Prostate gland (tissue), 2 donors: ENCODE measurements at regions of chr6 and their contacts with region 1.

Region 1: DNA sequence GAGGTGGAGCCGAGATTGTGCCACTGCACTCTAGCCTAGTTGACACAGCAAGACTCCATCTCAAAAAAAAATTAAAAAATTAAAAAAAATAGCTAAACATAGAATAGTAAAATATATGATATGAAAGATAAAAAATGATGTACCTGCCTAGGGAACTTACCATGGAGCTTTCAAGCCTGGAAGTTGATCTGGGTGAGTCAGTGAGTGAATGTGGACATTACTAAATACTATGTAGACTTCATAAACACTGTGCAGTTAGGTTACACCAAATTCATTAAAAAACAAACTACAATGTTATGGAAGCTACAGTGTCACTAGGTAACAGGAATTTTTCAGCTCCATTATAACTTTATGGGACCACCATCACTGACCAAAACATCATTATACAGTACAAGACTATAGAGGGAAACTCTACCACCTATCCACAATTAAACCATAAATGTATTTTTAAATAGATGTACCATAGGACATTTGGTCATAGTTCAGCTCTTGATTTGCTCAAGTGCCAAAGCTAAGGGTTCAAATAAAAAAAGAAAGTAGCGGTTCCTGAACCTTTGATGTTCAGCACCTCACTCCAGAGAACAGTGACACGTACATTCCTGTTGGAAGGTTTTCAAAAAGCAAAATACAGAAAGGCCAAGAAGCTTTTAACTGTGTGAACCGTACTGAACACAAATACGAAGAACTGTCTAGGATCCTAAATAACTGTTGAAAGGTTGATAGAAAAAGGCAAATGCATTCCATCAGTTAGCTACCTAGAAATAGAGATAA is 52.4 kb upstream of the SPDEF start:
- DNase-seq: no peak
- H3K4me3 ChIP-seq: no peak overlapping the region
- H3K27ac ChIP-seq: peak overlapping the region; percentile 67 to 76
- H3K4me1 ChIP-seq: peaks cover 10% of the 10 kb centered on the region
- H3K27me3 ChIP-seq: no peaks in the 10 kb centered on the region
- CTCF ChIP-seq: no peak
- POLR2A ChIP-seq: no peak

Region 2: GRCh38 chr6:34196126-34196830 is 412.2 kb before region 1 on chr6:
- intact Hi-C with region 1: loop called (anchors 5 kb)
- DNase-seq: peak; percentile 79
- H3K4me3 ChIP-seq: peak overlapping the region; percentile 32 to 41
- H3K27ac ChIP-seq: no peak overlapping the region
- H3K4me1 ChIP-seq: no peaks in the 10 kb centered on the region
- H3K27me3 ChIP-seq: no peaks in the 10 kb centered on the region
- CTCF ChIP-seq: peak; percentile 91 to 98 (median 94)
- POLR2A ChIP-seq: peak; percentile 18

Region 3: DNA sequence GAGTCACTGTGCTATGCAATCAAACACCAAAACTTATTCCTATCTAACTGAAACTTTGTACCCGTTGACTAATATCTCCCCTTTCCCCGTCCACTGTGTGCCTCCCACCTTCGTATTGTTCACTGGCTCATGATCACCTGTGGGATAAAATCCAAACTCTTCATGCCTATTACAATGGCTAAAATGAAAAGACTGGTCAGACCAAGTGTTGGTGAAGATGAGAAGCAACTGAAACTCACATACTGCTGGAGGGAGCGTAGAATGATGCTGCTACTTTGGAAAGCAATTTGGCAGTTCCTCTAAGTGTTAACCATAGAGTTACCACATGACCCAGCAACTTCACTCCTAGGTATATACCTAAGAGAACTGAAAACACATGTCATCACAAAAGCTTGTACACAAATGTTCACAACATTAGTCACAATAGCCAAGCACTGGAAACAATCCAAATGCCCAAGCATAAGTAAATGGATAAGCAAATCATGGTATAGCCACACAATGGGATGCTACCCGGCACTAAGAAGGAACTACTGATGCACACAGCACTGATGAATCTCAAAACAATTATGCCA is 195.8 kb before region 1 on chr6:
- intact Hi-C with region 1: no loop called
- DNase-seq: no peak
- H3K4me3 ChIP-seq: no peak overlapping the region
- H3K27ac ChIP-seq: no peak overlapping the region
- H3K4me1 ChIP-seq: peaks cover 7% of the 10 kb centered on the region
- H3K27me3 ChIP-seq: no peaks in the 10 kb centered on the region
- CTCF ChIP-seq: no peak
- POLR2A ChIP-seq: no peak

Region 4: GRCh38 chr6:34436803-34437643 is 171.5 kb before region 1 on chr6:
- intact Hi-C with region 1: no loop called
- DNase-seq: no peak
- H3K4me3 ChIP-seq: no peak overlapping the region
- H3K27ac ChIP-seq: peak overlapping the region in 1 of 2 donors; percentile 27
- H3K4me1 ChIP-seq: no peaks in the 10 kb centered on the region
- H3K27me3 ChIP-seq: no peaks in the 10 kb centered on the region
- CTCF ChIP-seq: no peak
- POLR2A ChIP-seq: no peak

Region 5: DNA sequence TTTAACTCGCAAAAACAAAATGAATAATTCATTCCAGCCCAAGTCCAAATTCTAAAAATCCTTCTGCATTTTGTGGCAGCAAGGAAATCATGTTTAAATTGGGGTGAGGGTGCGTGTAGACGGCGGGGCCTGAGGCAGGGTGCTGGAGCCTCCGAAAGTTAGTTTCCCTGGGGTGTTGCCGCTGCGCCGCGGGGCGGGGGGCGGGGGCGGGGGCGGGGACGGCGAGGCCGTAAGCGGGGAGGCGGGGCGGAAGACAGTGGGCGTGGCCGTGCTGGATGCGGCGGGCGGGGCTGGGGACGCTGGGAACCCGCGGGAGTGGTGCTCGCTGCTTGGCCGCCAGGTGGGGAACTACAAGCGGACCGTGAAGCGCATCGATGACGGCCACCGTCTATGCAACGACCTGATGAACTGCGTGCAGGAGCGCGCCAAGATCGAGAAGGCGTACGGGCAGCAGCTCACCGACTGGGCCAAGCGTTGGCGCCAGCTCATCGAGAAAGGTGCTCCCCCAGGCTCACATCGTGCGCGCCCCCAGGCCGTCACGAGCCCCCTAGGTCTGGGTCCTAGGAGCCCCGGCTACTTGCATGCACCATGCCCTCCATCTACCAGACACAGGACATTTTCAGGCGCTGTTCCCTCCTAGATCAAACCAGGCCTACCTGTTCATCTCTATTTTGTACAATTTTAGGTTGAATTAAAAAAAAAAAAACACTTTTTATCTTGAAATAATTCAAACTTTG is 81.3 kb before region 1 on chr6:
- intact Hi-C with region 1: loop called (anchors 5 kb)
- DNase-seq: peak; percentile 95
- H3K4me3 ChIP-seq: peak overlapping the region in 1 of 2 donors; percentile 11
- H3K27ac ChIP-seq: peak overlapping the region; percentile 14 to 46
- H3K4me1 ChIP-seq: no peaks in the 10 kb centered on the region
- H3K27me3 ChIP-seq: no peaks in the 10 kb centered on the region
- CTCF ChIP-seq: peak; percentile 70 to 91 (median 78)
- POLR2A ChIP-seq: peak; percentile 4

Region 6: DNA sequence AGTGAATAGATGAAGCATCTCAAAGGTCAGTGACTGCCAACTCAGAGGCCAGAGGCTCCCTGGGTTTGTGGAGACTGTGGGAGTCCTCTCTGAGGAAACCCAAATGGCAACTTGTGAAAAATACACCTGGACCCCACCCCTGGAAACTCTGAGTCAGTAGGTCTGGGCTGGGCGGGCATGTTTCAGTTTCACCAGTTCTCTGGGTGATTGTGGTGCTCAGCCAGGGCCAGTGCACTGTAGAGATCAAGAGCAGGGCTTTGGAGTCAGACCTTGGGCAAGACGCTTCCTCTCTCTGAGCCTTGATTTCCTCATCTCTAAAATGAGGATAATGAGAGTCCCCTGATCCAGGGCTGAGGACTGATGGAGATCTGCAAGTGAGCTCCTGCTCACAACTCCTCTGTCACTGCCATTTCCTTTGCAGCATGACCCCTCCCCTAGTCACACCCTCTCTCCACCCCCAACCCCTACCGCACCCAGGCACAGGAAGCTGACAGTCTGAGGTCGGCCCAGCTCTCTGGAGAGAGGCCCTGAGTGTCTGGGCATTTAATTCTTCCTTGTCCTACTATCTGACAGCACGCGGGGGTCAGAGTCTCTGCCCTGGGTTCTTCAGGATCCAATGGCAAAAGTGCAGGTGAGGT is 694.2 kb after region 1 on chr6:
- intact Hi-C with region 1: no loop called
- DNase-seq: no peak
- H3K4me3 ChIP-seq: no peak overlapping the region
- H3K27ac ChIP-seq: no peak overlapping the region
- H3K4me1 ChIP-seq: no peaks in the 10 kb centered on the region
- H3K27me3 ChIP-seq: no peaks in the 10 kb centered on the region
- CTCF ChIP-seq: no peak
- POLR2A ChIP-seq: peak; percentile 28